BJ (cell line): ENCODE measurements at regions of chr13 and their contacts with region 1.

Region 1: DNA sequence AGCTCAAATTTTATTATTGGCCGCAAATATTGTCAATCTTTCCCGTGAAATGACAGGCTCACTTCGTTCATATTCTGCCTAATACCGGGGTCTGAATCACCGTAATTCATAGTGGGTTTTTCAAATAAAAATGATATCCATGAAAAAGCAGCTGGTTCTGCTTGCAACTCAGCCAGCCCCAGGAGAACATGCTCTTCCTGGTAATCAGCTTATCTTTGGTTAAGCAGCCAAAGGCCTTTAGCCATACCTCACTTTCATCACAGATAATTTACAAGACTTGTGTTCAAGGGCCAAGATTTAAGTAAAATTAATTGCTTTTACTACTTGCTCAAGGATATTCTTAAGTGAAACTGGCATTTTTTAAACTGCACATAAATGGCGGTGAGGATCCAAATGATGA is 22.5 kb downstream of the RNASEH2B start:
- DNase-seq: no peak
- H3K4me3 ChIP-seq: no peak overlapping the region
- H3K27me3 ChIP-seq: no peaks in the 10 kb centered on the region
- CTCF ChIP-seq: no peak

Region 2: DNA sequence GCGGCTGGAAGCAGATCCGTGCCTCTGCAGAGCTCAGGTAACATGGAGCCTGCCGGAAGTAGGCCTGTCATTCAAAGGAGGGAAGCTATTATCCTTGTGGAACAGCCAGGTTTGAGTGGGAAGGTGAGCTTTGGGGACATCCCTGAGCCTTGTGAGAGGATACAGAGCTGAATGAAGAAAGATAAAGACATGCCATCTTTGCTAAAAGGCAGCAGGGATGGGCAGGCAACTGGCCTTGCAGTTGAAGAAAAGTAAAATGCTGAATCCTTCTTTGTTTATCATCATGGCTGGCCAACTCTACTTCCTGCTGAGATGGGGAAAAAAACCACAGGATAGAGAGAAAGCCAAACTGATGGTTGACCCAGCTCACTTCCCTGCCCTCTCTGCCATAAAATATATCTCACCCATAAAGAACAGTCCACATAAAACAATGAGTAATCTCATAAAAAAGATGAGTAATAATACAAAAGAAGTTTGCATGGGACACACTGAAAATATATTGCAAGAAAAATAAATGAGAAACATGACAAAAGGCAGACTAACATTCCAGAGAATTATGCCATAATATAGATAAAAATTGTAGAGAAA is 314.9 kb before region 1 on chr13:
- CTCF ChIA-PET with region 1: no interaction called
- POLR2A ChIA-PET with region 1: no interaction called
- DNase-seq: peak; percentile 91
- H3K4me3 ChIP-seq: no peak overlapping the region
- H3K27me3 ChIP-seq: peaks cover 3% of the 10 kb centered on the region
- CTCF ChIP-seq: no peak

Region 3: GRCh38 chr13:50911937-50912795 is 19.9 kb before region 1 on chr13:
- CTCF ChIA-PET with region 1: interaction called, 10 read pairs
- POLR2A ChIA-PET with region 1: no interaction called
- DNase-seq: no peak
- H3K4me3 ChIP-seq: no peak overlapping the region
- H3K27me3 ChIP-seq: no peaks in the 10 kb centered on the region
- CTCF ChIP-seq: peak; percentile 94

Region 4: DNA sequence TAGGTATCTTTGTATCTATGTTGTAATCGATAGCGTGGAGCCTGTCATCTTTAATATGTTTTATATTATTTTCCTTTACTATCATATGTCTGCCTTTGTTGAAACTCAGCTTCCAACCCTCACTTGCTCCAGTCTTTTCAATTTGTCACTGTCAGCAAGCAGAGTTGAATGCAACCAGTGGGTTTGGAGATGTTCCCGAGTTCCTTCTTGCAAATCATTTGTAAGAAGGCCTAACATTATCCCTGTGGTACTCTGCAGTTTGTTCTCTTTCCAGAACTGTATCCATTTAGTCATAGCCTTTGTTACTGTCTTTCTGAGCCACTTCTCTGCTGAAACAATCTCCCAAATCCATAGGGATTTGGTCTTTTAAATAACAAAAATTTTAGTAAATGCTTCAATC is 19.3 kb after region 1 on chr13:
- CTCF ChIA-PET with region 1: no interaction called
- POLR2A ChIA-PET with region 1: no interaction called
- DNase-seq: no peak
- H3K4me3 ChIP-seq: no peak overlapping the region
- H3K27me3 ChIP-seq: no peaks in the 10 kb centered on the region
- CTCF ChIP-seq: no peak

Region 5: GRCh38 chr13:51246418-51247277 is 314.6 kb after region 1 on chr13:
- CTCF ChIA-PET with region 1: no interaction called
- POLR2A ChIA-PET with region 1: no interaction called
- DNase-seq: no peak
- H3K4me3 ChIP-seq: no peak overlapping the region
- H3K27me3 ChIP-seq: peaks cover 4% of the 10 kb centered on the region
- CTCF ChIP-seq: no peak

Region 6: GRCh38 chr13:51435002-51435578 is 503.0 kb after region 1 on chr13:
- CTCF ChIA-PET with region 1: no interaction called
- POLR2A ChIA-PET with region 1: no interaction called
- DNase-seq: no peak
- H3K4me3 ChIP-seq: no peak overlapping the region
- H3K27me3 ChIP-seq: no peaks in the 10 kb centered on the region
- CTCF ChIP-seq: peak; percentile 51